ENCODE measurements at regions of chr1 and their contacts with region 1.

Region 1: GRCh38 chr1:7752512-7753417 is 18.3 kb upstream of the VAMP3 start:
- DNase-seq: peak; percentile 61 to 72 (median 68)
- H3K4me3 ChIP-seq: peak overlapping the region in 5 of 7 experiments; percentile 44 to 65 (median 61)
- H3K27ac ChIP-seq: no peak overlapping the region
- H3K4me1 ChIP-seq: peaks cover 12 to 45% (median 20%) of the 10 kb centered on the region in 4 experiments
- H3K27me3 ChIP-seq: no peaks in the 10 kb centered on the region

Region 2: GRCh38 chr1:7694600-7695496 is 57.9 kb before region 1 on chr1:
- CTCF ChIA-PET with region 1: interaction called, 15 read pairs
- POLR2A ChIA-PET with region 1: no interaction called
- DNase-seq: no peak
- H3K4me3 ChIP-seq: no peak overlapping the region
- H3K27ac ChIP-seq: no peak overlapping the region
- H3K4me1 ChIP-seq: no peaks in the 10 kb centered on the region
- H3K27me3 ChIP-seq: peaks cover 0 to 2% (median 0%) of the 10 kb centered on the region in 5 experiments

Region 3: GRCh38 chr1:7733276-7733675 is 19.5 kb before region 1 on chr1:
- CTCF ChIA-PET with region 1: interaction called, 54 read pairs
- POLR2A ChIA-PET with region 1: no interaction called
- DNase-seq: peak in 2 of 3 donors; percentile 11 to 34
- H3K4me3 ChIP-seq: no peak overlapping the region
- H3K27ac ChIP-seq: no peak overlapping the region
- H3K4me1 ChIP-seq: peaks cover 0 to 19% (median 8%) of the 10 kb centered on the region in 4 experiments
- H3K27me3 ChIP-seq: no peaks in the 10 kb centered on the region

Region 4: DNA sequence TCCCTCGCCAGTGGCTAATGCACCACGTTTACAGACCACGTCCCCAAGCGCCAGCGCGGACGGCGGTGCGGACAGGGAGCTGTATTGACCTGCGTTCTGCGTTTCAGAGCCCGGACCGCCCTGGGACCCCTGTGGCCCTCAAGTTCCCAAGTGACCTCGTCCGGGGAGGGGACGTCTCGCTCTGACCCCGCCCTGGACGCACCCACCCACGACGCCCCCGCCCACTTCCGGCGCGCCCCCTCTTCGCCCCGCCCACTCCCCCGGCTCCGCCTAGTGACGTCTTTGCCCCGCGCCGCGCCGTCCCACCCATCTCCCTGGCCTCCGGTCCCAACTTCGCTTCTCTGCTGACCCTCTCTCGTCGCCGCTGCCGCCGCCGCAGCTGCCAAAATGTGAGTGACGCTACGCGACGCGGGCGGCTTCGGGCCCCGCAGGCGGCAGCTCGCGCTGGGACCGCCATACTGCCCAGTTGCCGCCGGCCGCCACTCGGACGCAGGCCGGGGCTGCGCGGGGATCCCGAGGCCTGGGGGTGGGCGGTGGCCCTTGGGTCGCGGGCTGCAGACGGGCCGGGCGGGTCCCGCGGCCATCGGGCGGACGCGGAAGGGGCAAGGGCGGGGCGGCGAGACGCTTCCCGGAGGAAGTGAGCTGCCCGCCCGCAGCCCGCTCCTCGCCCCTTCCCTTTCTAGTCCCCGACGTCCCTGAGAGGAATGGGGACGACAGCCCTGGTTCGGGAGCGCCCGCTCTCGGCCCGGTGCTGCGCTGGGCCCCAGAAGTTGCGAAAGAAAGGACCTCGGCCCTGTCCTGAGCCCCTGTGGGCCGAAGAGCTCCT is 18.4 kb after region 1 on chr1 and contains the start of gene VAMP3:
- CTCF ChIA-PET with region 1: interaction called, 86 read pairs
- POLR2A ChIA-PET with region 1: no interaction called
- DNase-seq: peak; percentile 77 to 87 (median 83)
- H3K4me3 ChIP-seq: peak within 1 kb of the TSS; percentile 79 to 97 (median 93)
- H3K27ac ChIP-seq: peak within 1 kb of the TSS; percentile 51 to 84
- H3K4me1 ChIP-seq: peaks cover 5 to 22% (median 14%) of the 10 kb centered on the region in 4 experiments
- H3K27me3 ChIP-seq: no peaks in the 10 kb centered on the region

Region 5: DNA sequence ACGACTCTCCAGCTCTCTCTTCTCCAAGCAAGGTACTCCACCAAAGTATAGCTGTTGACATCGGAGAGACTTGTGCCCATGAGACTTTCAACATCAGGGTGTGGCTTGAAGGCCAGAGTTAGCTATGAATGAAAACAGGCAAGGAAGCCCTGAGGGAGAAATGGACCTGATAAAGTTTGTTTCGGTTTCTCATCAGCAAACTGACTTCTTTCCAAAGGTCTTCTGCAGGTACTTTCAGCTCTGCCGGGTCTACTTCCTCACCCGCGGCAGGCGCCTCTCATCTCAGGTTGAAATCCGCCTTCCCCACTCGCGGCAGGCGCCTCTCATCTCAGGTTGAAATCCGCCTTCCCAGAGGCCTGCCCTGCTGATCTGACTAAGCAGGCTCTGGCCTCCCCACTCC is 29.3 kb after region 1 on chr1:
- CTCF ChIA-PET with region 1: interaction called, 11 read pairs
- POLR2A ChIA-PET with region 1: no interaction called
- DNase-seq: peak in 2 of 3 donors; percentile 33 to 51
- H3K4me3 ChIP-seq: peak overlapping the region in 3 of 7 experiments; percentile 5 to 39 (median 6)
- H3K27ac ChIP-seq: no peak overlapping the region
- H3K4me1 ChIP-seq: peaks cover 2 to 34% (median 31%) of the 10 kb centered on the region in 4 experiments
- H3K27me3 ChIP-seq: no peaks in the 10 kb centered on the region

Region 6: DNA sequence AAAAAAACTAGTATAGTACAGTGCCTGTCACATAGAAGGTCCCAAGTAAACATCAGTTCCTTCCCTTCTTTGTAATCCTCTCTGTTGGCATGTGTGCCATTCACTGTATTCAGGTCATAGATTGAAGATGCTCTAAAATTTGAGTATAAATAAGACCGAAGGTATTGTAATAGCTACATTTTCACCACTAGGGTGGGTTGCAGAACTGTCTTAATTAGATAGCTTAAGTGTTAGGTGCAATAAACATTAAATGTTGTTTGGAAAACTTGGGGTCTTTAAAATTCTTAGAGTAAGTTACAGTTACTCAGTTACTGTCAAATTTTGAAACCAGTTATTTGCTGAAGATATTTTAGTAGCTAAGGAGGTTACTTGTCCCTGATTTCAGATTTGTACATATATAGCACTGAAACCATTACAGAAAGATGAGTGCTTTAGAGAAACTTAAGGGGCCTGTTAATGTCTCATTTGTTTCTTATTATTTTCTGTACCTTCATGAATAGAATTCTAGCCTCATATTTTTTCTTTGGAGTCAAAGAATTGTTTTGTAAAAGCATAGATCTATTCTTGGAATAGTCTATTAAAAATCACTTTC is 55.6 kb after region 1 on chr1:
- CTCF ChIA-PET with region 1: no interaction called
- POLR2A ChIA-PET with region 1: no interaction called
- DNase-seq: peak; percentile 55 to 72 (median 71)
- H3K4me3 ChIP-seq: no peak overlapping the region
- H3K27ac ChIP-seq: no peak overlapping the region
- H3K4me1 ChIP-seq: no peaks in the 10 kb centered on the region
- H3K27me3 ChIP-seq: no peaks in the 10 kb centered on the region